T-cell (primary cell): ENCODE measurements at regions of chr17 and their contacts with region 1.

Region 1: GRCh38 chr17:8997994-8998628 is 23.2 kb upstream of the NTN1 start:
- DNase-seq: peak; percentile 58 to 89 (median 75)
- ATAC-seq: peak; percentile 77 to 82 (median 80)
- H3K4me3 ChIP-seq: no peak overlapping the region
- H3K4me3 Mint-ChIP-seq: no peak overlapping the region
- H3K27ac ChIP-seq: no peak overlapping the region
- H3K27ac Mint-ChIP-seq: no peak overlapping the region
- H3K4me1 ChIP-seq: peaks cover 0 to 10% of the 10 kb centered on the region in 2 experiments
- H3K4me1 Mint-ChIP-seq: peaks cover 7 to 18% (median 12%) of the 10 kb centered on the region in 3 donors
- H3K27me3 ChIP-seq: peaks cover 4 to 25% of the 10 kb centered on the region in 2 experiments
- H3K27me3 Mint-ChIP-seq: peaks cover 22 to 40% of the 10 kb centered on the region in 2 donors

Region 2: DNA sequence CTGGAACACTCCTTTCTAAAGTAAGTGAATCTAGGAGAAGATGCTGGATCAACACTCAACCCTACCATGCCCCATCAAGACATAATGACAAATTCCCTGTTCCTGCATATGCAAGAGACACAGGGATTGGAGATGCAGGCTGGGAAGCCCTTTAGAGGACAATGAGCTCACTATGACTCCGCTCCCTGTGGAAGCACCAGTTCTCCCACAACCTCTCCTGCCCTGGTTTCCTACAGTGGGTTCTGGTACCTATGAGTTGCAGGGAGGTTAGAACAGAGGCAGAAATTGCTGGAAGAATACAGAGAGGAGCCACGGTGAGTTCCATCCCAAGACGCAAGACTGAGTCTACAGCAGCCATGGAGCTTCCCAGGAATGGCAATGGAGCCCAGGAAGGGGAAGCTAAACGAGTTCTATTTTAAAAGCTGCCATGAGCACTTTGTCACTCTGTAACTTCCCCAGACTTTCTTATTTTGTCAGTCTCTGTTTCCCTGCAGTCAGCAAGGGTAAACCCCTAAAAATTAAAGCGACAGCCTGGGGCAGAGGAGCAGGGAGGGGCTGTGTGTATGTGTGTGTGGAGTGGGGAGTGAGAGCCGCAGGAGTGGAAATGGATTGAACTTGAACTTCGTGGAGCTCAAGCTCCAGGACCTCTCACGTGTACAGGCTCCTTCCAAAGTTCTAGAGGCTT is 88.4 kb before region 1 on chr17:
- CTCF ChIA-PET with region 1: no interaction called
- POLR2A ChIA-PET with region 1: no interaction called
- DNase-seq: no peak
- ATAC-seq: no peak
- H3K4me3 ChIP-seq: no peak overlapping the region
- H3K4me3 Mint-ChIP-seq: no peak overlapping the region
- H3K27ac ChIP-seq: peak overlapping the region; percentile 4
- H3K27ac Mint-ChIP-seq: no peak overlapping the region
- H3K4me1 ChIP-seq: peaks cover 0 to 23% of the 10 kb centered on the region in 2 experiments
- H3K4me1 Mint-ChIP-seq: peaks cover 22 to 36% (median 34%) of the 10 kb centered on the region in 3 donors
- H3K27me3 ChIP-seq: no peaks in the 10 kb centered on the region
- H3K27me3 Mint-ChIP-seq: no peaks in the 10 kb centered on the region

Region 3: DNA sequence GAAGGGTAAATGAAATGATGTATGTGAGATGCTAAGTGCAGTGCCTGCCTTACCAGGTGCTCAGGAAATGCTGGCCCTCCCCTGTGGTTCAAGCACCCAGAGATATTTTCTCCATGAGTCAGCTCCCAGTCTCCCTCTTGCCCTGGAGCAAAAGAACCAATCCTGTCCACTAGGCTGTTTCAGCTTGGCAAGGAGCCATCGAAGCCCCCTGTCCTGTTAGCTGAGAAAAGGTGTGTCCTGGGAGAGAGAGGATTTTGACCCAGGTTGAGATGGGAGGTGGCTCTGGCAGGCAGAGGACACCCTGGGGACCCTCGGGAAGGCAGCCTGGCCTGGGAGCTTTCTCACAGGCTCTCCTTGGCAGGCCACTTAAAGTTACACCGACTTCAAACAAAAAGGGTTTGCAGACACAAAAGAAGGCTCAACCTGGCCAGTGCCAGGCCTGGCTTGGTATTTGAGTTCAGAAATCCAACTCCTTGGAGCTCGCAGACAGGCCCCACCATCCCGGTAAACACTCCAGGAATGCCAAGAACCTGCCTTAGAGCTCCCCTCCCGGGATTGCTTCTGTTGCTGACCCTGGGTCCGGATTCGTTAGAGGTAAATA is 52.8 kb after region 1 on chr17:
- CTCF ChIA-PET with region 1: no interaction called
- POLR2A ChIA-PET with region 1: interaction called in 1 of 2 experiments, 12 read pairs
- DNase-seq: no peak
- ATAC-seq: no peak
- H3K4me3 ChIP-seq: no peak overlapping the region
- H3K4me3 Mint-ChIP-seq: no peak overlapping the region
- H3K27ac ChIP-seq: no peak overlapping the region
- H3K27ac Mint-ChIP-seq: no peak overlapping the region
- H3K4me1 ChIP-seq: no peaks in the 10 kb centered on the region
- H3K4me1 Mint-ChIP-seq: no peaks in the 10 kb centered on the region
- H3K27me3 ChIP-seq: peaks cover 0 to 26% of the 10 kb centered on the region in 2 experiments
- H3K27me3 Mint-ChIP-seq: peaks cover 11 to 21% of the 10 kb centered on the region in 2 donors

Region 4: GRCh38 chr17:9702914-9703780 is 705.0 kb after region 1 on chr17:
- CTCF ChIA-PET with region 1: no interaction called
- POLR2A ChIA-PET with region 1: no interaction called
- DNase-seq: no peak
- ATAC-seq: no peak
- H3K4me3 ChIP-seq: no peak overlapping the region
- H3K4me3 Mint-ChIP-seq: no peak overlapping the region
- H3K27ac ChIP-seq: no peak overlapping the region
- H3K27ac Mint-ChIP-seq: no peak overlapping the region
- H3K4me1 ChIP-seq: no peaks in the 10 kb centered on the region
- H3K4me1 Mint-ChIP-seq: peaks cover 0 to 2% (median 0%) of the 10 kb centered on the region in 3 donors
- H3K27me3 ChIP-seq: peaks cover 0 to 3% of the 10 kb centered on the region in 2 experiments
- H3K27me3 Mint-ChIP-seq: no peaks in the 10 kb centered on the region